Dendritic cell treated with granulocyte-macrophage colony-stimulating factor and Interleukin-4, amounts not matched to agents 40 ng/mL and 50 ng/mL, for 4 days (primary cell): ENCODE measurements at regions of chr7 and their contacts with region 1.

Region 1: DNA sequence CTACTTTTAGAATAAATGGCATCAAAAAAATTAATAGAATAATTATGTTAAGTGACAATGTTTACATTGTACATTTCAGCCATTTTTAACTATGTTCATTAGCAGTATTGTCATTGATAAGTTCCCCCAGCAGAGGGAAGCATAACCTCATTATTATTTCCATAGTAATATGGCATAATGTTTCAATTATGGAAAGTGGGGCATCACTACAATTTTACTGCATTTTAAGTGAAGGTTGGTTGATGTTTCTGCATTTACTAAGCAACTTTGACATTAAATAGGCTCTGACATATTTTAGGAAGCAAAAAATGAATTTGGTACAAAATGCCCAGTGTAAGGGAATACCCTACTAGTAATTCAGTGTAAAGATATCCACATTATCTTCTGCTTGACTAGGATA is 218.3 kb downstream of the SEMA3A start:
- H3K4me3 Mint-ChIP-seq: no peak overlapping the region
- H3K27ac Mint-ChIP-seq: no peak overlapping the region
- H3K4me1 Mint-ChIP-seq: no peaks in the 10 kb centered on the region
- H3K27me3 Mint-ChIP-seq: no peaks in the 10 kb centered on the region

Region 2: DNA sequence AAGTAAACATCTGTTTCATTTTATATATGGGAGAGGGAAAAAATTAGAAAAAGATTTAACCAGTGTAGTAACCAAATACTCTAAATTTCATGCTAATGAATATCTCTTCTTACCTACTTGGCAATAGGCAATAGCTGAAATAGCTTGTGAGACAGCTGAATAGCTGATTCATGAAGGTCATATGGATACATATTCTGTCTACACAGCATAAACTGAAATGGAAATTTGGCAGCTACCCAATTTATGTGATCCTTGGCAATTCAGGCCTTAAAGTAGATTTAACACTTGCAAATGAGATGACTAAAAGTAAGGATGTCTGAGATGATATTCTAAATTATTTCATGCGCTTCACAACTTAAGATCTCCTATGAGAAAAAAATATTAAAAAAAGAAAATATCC is 479.5 kb after region 1 on chr7:
- intact Hi-C with region 1: loop called (anchors 1 kb)
- H3K4me3 Mint-ChIP-seq: no peak overlapping the region
- H3K27ac Mint-ChIP-seq: no peak overlapping the region
- H3K4me1 Mint-ChIP-seq: no peaks in the 10 kb centered on the region
- H3K27me3 Mint-ChIP-seq: no peaks in the 10 kb centered on the region

Region 3: DNA sequence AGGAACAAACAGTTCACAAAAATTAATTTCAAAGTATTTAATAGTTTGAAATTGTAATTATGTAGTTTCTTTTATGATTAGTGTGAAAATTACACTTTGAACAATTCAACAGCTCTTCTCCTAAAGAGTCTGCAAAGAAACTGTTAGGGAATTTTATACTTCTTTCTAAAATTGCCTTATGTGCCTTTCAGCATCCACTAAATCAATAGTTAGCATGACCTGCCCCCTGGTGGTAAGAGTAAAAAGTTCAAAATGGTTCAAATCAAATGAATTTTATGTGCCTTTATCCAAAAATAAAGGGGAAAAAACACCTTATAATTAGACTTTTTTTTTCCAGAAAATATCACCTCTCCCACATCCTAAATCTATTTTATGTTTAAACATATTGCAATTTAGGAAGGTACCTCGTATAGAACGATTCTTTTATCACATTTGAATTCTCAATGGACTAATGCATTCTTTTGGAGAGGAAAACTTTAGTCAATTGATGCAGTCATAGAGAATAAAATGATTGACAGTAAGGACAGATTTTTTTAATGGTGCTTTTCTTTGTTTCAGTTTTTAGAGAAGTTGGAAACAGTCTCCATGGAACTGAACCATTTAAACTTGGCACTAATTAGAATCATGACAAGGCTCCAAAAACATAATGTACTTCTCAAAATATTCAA is 1046.9 kb after region 1 on chr7:
- intact Hi-C with region 1: loop called (anchors 1 kb)
- H3K4me3 Mint-ChIP-seq: no peak overlapping the region
- H3K27ac Mint-ChIP-seq: no peak overlapping the region
- H3K4me1 Mint-ChIP-seq: no peaks in the 10 kb centered on the region
- H3K27me3 Mint-ChIP-seq: no peaks in the 10 kb centered on the region

Region 4: DNA sequence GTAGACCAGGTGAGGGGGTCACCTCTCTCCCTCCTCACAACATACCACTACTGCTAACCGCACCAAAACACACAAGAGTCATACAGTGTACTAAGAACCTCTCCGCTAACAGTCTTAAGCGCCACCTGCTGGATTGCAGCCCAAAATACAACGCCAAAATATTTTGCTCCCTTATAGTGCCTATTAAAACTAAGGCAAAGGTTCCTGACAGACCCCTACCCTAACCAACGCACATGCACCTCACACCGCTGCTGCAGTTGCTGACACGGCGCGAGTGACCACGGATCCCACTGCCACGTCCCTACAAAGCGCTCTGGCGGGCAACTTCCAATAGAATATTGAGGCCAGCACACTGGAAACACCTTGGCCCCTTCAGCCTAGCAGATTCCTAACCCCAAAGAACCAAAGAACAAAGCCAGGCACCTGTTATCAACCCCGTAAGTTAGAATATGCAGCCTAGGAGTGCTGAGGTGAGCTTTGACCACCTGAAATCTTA is 1774.2 kb after region 1 on chr7:
- intact Hi-C with region 1: loop called (anchors 10 kb)
- H3K4me3 Mint-ChIP-seq: no peak overlapping the region
- H3K27ac Mint-ChIP-seq: no peak overlapping the region
- H3K4me1 Mint-ChIP-seq: no peaks in the 10 kb centered on the region
- H3K27me3 Mint-ChIP-seq: no peaks in the 10 kb centered on the region